ENCODE measurements at regions of chr4 and their contacts with region 1.

Region 1: GRCh38 chr4:54999003-54999402 is 126.4 kb downstream of the KDR start:
- DNase-seq: no peak
- ATAC-seq: peak; percentile 45
- H3K4me3 ChIP-seq: no peak overlapping the region
- H3K27ac ChIP-seq: no peak overlapping the region
- H3K4me1 ChIP-seq: no peaks in the 10 kb centered on the region
- H3K27me3 ChIP-seq: no peaks in the 10 kb centered on the region
- CTCF ChIP-seq: peak; percentile 53

Region 2: DNA sequence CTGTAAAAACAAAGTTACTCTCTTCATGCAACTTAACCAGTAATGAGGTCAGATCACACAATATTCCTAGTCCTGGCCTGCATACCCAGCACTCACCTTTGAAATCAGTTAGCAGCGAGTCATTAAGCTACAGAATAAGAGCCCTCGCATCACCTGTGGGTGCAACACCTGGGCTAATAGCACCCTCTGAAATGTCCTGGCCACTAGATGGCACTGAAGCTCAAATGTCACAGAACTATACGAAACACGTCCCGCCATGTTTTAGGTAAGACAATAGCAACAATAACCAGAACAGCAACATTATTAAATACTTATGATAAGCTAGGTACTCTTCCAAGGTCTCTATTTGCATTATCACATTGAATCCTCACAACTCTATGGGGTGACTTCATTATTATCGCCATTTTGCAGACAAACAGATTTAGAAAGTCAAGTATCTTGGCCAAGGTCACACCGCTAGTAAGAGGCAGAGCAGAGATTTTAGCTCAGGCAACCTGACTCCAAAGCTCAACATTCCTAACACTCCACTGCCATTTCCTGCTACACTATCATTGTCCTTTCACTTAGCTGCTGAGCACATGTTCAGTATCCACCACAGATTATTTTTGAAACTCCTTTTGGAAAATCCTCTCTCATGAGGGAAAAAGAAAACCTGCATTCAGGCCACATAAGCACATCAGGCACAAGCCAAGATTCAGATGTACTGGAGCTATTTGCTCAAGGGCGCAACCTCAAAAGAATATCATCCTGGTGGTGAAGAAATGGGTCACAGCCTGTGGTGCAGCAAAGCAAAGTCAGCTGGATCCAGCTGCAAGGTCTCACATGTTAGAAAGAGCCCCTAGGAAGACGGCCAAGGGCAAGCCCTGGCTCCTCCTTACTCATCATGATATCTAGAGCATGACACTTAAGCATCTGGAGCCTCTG is 185.9 kb after region 1 on chr4:
- intact Hi-C with region 1: no loop called
- DNase-seq: no peak
- ATAC-seq: peak; percentile 71
- H3K4me3 ChIP-seq: no peak overlapping the region
- H3K27ac ChIP-seq: peak overlapping the region; percentile 33
- H3K4me1 ChIP-seq: no peaks in the 10 kb centered on the region
- H3K27me3 ChIP-seq: no peaks in the 10 kb centered on the region
- CTCF ChIP-seq: peak; percentile 37

Region 3: DNA sequence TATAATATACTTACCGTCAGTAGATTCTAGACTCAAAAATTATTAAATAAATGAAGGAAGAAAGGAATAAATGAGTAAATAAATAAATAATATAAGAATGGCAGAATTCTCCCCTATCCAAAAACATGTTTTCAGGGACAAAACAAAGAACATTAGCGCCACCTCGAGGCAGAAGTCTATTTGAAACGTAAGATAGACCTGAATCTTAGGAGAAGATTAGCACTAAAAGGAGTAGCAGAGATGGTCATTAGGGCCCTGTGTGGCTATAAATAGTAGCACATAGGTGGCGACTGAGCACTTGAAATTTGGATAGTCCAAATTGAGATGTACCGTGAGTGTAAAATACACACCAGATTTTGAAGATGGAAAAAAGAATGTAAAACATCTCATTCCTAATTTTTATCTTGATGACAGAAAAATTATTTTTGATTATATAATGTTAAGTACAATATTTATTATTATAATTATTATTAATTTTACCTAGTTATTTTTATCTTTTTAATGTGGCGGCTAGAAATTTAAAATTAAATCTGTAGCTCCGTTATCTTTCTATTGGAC is 322.8 kb after region 1 on chr4:
- intact Hi-C with region 1: loop called (anchors 10 kb)
- DNase-seq: no peak
- ATAC-seq: peak; percentile 82
- H3K4me3 ChIP-seq: no peak overlapping the region
- H3K27ac ChIP-seq: no peak overlapping the region
- H3K4me1 ChIP-seq: peaks cover 8% of the 10 kb centered on the region
- H3K27me3 ChIP-seq: no peaks in the 10 kb centered on the region
- CTCF ChIP-seq: peak; percentile 72

Measured in upper lobe of right lung (tissue), 1 donor.